Right ventricle myocardium superior (tissue), 1 donor: ENCODE measurements at regions of chr2 and their contacts with region 1.

Region 1: GRCh38 chr2:130352243-130352692 is 3.6 kb upstream of the PTPN18 start:
- DNase-seq: no peak
- ATAC-seq: no peak

Region 2: GRCh38 chr2:130310881-130311280 is 41.4 kb before region 1 on chr2:
- intact Hi-C with region 1: no loop called
- DNase-seq: no peak
- ATAC-seq: no peak

Region 3: GRCh38 chr2:130391058-130391871 is 39.0 kb after region 1 on chr2:
- intact Hi-C with region 1: loop called (anchors 5 kb)
- DNase-seq: peak; percentile 92
- ATAC-seq: peak; percentile 91